Sigmoid colon (tissue), 7 donors: ENCODE measurements at regions of chr4 and their contacts with region 1.

Region 1: DNA sequence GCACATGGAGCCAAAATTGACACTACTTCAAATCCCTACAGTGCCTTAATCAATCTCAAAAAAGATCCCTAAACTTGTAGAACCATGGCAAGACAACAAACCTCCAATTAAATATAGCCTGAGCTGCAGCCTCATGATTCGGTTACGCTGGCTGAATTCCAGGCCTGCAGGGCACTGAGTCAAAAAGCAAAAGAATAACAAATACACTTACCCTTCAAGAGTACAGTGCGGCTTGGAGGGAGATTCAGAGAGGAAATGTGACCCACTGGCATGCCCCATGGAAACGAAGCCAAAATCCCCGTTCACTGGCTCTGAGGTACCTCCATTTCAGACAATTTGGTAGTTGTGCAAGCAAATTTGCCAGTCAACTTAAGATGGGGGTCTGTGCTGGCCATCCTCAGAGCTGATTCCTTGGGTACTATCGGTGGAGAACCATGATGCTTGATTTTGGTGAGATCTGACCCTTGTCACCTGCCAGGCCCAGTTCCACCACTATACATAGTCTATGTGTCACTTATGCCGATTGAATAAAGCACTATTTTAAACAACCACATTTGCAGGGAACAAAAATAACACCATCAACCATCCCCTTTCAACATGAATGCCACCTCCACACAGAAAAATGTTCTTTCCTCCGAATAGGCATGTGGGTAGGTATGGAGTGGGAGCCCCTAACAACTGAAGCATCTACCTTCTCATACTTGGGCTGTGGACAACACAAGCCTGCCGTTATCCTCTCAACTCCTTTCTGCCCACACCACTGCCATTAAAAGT is 2.1 kb downstream of the C4orf54 start:
- DNase-seq: peak; percentile 83
- H3K4me3 ChIP-seq: no peak overlapping the region
- H3K27ac ChIP-seq: peak overlapping the region; percentile 30 to 66 (median 63)
- H3K4me1 ChIP-seq: peaks cover 0 to 44% (median 30%) of the 10 kb centered on the region in 4 donors
- H3K27me3 ChIP-seq: no peaks in the 10 kb centered on the region
- CTCF ChIP-seq: no peak
- EP300 ChIP-seq: no peak
- POLR2A ChIP-seq: no peak

Region 2: DNA sequence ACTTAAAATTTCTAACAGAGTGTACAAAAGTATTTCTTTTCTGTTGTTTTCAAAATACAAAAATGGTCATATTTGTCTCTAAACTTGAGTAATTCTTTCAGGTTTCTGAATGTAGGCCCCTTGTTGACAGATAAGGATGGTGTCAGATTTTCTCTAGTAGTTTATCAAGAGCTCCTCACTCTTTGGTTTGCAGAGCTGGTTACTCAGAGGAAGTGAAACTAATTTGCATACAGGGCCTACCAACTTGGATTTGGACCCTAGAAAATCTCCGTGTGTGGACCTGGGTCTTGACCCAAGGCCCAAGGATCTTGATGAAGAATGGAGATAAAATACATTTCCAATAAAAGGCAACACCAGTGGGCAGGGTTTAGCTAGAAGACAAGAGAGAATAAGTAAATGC is 436.0 kb before region 1 on chr4:
- intact Hi-C with region 1: no loop called
- DNase-seq: no peak
- H3K4me3 ChIP-seq: no peak overlapping the region
- H3K27ac ChIP-seq: no peak overlapping the region
- H3K4me1 ChIP-seq: peaks cover 0 to 12% (median 2%) of the 10 kb centered on the region in 4 donors
- H3K27me3 ChIP-seq: no peaks in the 10 kb centered on the region
- CTCF ChIP-seq: no peak
- EP300 ChIP-seq: no peak
- POLR2A ChIP-seq: no peak

Region 3: DNA sequence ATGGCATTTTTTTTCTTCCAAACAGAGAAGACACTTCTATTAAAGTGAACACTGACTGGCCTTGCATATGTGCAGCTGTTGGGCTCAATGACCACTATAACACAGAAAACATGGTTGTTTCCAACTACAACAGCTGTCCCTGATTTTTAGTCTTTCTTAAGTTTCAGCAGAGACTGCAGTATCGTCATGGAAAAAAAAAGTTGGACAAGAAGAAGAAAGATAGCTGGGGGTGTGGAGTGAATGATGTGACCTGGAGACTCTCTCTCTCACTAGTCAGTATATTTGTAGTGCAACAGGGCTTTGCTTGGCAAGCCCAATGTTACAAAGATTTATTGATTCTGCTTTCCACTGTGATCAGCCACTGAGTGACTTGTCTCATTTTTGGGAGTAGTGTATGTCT is 31.6 kb after region 1 on chr4:
- intact Hi-C with region 1: no loop called
- DNase-seq: no peak
- H3K4me3 ChIP-seq: no peak overlapping the region
- H3K27ac ChIP-seq: no peak overlapping the region
- H3K4me1 ChIP-seq: no peaks in the 10 kb centered on the region
- H3K27me3 ChIP-seq: no peaks in the 10 kb centered on the region
- CTCF ChIP-seq: no peak
- EP300 ChIP-seq: no peak
- POLR2A ChIP-seq: no peak

Region 4: DNA sequence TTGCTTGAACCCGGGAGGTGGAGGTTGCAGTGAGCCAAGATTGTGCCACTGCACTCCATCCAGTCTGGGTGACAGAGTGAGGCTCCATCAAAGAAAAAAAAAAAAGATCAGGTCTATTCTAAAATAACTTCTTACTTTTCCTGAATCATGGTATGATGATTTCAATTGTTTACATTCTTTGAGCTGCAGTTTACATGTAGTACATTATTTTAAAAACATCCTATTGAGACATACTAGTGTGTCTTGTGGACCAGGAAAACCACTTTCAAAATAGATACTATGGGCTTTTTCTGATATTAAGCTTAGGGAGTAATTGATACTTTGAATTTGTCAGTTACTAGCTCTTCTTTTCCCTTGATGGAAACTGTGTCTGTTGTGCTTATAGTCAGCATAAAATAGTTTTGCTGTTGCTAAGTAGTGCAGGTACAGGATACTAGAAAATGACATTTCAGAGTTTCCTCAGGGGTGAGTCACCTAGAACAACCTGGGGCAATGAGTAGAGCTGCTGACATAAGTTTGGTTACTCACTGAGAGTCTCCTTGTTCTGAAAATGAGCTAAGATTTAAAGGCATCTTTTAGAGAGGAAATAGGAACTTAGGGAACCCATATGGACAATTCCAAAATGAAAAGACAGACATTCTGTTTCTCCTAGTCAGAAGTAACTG is 55.3 kb after region 1 on chr4:
- intact Hi-C with region 1: loop called (anchors 5 kb)
- DNase-seq: no peak
- H3K4me3 ChIP-seq: no peak overlapping the region
- H3K27ac ChIP-seq: peak overlapping the region in 2 of 4 donors; percentile 17 to 27
- H3K4me1 ChIP-seq: peaks cover 0 to 16% (median 14%) of the 10 kb centered on the region in 4 donors
- H3K27me3 ChIP-seq: no peaks in the 10 kb centered on the region
- CTCF ChIP-seq: no peak
- EP300 ChIP-seq: no peak
- POLR2A ChIP-seq: no peak